ENCODE measurements at regions of chr5 and their contacts with region 1.

Region 1: GRCh38 chr5:114449860-114450421 is 88.1 kb downstream of the KCNN2 start:
- DNase-seq: peak; percentile 37
- ATAC-seq: peak; percentile 94
- H3K4me3 Mint-ChIP-seq: no peak overlapping the region
- H3K27ac Mint-ChIP-seq: no peak overlapping the region
- H3K4me1 Mint-ChIP-seq: no peaks in the 10 kb centered on the region
- H3K27me3 Mint-ChIP-seq: peaks cover 3% of the 10 kb centered on the region
- CTCF ChIP-seq: no peak

Region 2: DNA sequence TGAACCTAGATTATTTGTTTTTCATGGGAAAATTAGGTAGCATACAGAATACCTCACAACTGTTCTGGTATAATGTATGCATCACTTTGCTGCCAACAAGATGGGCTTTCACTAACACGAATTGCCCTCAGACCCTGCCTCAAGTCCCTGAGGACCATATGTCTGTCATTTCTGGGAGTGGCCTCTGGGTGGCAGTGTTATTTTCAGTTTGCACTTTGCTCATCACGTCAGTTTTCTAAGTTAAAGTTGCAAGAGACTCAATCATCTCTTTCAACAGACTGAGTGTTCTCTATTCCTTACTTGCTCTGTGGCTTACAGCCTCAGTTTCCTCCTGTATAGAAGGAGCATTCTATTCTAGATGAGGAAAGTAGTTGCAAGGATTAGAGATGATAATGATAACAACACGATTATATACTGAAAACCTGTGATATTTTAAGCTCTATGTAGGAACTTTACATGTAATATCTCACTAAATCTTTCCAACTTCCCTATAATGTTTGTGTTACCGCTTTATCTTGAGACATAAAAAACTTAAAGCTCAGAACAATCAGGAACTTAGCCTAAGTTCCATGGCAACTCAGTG is 1070.9 kb before region 1 on chr5:
- CTCF ChIA-PET with region 1: no interaction called
- POLR2A ChIA-PET with region 1: no interaction called
- intact Hi-C with region 1: loop called (anchors 5 kb)
- DNase-seq: no peak
- ATAC-seq: peak; percentile 71
- H3K4me3 Mint-ChIP-seq: no peak overlapping the region
- H3K27ac Mint-ChIP-seq: no peak overlapping the region
- H3K4me1 Mint-ChIP-seq: peaks cover 5% of the 10 kb centered on the region
- H3K27me3 Mint-ChIP-seq: peaks cover 18% of the 10 kb centered on the region
- CTCF ChIP-seq: no peak

Region 3: DNA sequence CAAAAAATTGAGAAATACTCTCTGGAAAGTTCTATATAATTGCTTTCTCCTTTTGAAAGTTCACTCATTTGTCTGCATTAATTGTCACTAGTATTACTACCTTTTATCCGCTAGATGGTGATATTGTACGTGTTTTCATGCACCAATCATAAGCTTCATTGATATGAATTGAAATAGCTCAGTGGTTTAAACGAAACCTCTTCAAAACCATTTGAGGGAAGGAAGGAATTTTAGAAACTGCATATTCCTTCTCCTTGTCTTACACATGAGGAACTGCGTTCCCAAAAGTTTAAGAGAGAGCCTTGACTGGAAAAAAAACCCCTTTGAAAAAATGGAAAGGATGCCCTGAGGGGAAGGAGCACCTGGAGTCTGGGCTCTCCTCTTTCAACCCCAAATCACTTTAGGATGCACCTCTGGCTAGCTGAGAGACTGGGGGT is 837.9 kb before region 1 on chr5:
- CTCF ChIA-PET with region 1: interaction called, 51 read pairs
- POLR2A ChIA-PET with region 1: no interaction called
- intact Hi-C with region 1: loop called (anchors 1 kb)
- DNase-seq: no peak
- ATAC-seq: peak; percentile 52
- H3K4me3 Mint-ChIP-seq: no peak overlapping the region
- H3K27ac Mint-ChIP-seq: no peak overlapping the region
- H3K4me1 Mint-ChIP-seq: no peaks in the 10 kb centered on the region
- H3K27me3 Mint-ChIP-seq: peaks cover 24% of the 10 kb centered on the region
- CTCF ChIP-seq: no peak

Region 4: DNA sequence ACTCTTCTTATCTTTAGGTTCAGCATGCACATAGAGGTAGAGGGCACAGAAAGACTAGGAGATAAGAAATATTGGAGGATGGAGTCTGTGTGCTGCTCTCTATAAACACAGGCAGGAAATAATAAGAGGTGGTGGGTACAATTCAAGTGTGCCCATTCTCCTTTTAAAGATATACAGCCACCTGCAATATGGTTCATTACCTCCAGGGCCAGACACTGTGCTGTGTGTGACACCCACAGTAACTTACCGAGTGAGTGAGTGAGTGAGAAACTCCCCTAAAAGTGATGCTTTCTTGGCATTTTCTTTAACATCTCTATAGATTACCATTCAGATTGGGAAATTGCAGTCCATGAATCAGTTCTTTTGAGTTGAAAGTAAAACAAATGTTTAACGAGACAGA is 399.9 kb before region 1 on chr5:
- CTCF ChIA-PET with region 1: no interaction called
- POLR2A ChIA-PET with region 1: no interaction called
- intact Hi-C with region 1: no loop called
- DNase-seq: no peak
- ATAC-seq: no peak
- H3K4me3 Mint-ChIP-seq: no peak overlapping the region
- H3K27ac Mint-ChIP-seq: no peak overlapping the region
- H3K4me1 Mint-ChIP-seq: no peaks in the 10 kb centered on the region
- H3K27me3 Mint-ChIP-seq: peaks cover 14% of the 10 kb centered on the region
- CTCF ChIP-seq: no peak

Region 5: DNA sequence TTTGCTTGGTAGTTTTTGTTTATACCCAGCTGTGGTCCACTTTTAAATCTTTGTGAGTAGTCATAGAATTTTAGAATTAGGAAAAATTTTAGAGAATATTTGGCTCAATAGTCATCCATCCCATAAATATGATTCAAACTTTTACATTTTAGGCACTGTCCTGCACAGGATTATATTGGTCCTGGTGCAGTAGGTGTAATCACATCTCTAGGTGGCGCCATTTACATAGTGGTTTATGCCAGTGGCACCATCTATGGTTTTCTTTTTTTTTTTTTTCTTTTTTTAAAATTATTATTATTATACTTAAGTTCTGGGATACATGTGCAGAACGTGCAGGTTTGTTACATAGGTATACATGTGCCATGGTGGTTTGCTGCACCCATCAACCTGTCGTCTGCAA is 348.8 kb before region 1 on chr5:
- CTCF ChIA-PET with region 1: no interaction called
- POLR2A ChIA-PET with region 1: no interaction called
- intact Hi-C with region 1: loop called (anchors 5 kb)
- DNase-seq: no peak
- ATAC-seq: no peak
- H3K4me3 Mint-ChIP-seq: no peak overlapping the region
- H3K27ac Mint-ChIP-seq: no peak overlapping the region
- H3K4me1 Mint-ChIP-seq: no peaks in the 10 kb centered on the region
- H3K27me3 Mint-ChIP-seq: no peaks in the 10 kb centered on the region
- CTCF ChIP-seq: no peak

Measured in activated B cell treated with CpG ODN at 0.5 μM for 24 hours (primary cell).